WTC11 (cell line): ENCODE measurements at regions of chr1 and their contacts with region 1.

Region 1: DNA sequence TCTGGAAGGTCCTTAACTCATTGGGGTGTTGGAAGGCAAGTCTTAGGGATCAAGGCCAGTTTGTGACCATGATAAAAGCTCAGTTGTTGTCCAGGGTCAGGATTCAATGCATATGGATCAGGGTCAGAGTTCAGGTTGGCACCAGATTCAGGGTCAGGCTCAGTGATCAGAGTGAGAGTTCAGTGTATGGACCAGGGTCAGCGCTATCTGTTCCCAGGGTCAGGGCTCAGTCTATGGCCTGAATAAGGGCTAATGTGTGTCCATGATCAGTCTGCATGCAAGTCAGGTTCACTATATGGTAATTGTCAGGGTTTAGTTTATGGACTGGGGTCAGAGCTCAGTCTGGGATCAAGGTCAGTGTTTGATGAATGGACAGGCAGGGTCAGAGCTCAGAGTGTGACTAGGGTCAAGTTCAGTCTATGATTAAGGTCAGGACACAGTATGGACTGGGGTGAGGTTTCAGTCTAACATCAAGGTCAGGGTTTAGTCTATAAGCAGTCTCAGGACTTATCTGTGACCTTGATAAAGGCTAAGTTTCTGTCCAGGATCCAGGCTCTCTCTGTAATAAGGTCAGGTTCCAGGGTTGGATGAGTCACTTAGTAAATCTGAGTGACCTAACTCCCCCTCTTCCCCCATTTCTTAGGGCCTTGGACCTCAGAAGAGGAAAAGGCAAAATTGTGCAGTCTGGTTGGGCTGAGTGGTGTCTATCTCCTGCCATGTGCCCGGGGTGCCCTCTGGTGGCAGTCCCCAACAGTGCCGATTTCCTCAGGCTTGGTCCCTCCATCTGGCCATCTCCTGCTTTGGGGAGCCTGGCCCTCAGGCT is 23.8 kb downstream of the KNCN start:
- DNase-seq: peak; percentile 91
- ATAC-seq: peak; percentile 60
- H3K4me3 Mint-ChIP-seq: no peak overlapping the region
- H3K27ac Mint-ChIP-seq: no peak overlapping the region
- H3K4me1 Mint-ChIP-seq: peaks cover 56% of the 10 kb centered on the region
- H3K27me3 Mint-ChIP-seq: peaks cover 97% of the 10 kb centered on the region
- CTCF ChIP-seq: peak; percentile 75

Region 2: DNA sequence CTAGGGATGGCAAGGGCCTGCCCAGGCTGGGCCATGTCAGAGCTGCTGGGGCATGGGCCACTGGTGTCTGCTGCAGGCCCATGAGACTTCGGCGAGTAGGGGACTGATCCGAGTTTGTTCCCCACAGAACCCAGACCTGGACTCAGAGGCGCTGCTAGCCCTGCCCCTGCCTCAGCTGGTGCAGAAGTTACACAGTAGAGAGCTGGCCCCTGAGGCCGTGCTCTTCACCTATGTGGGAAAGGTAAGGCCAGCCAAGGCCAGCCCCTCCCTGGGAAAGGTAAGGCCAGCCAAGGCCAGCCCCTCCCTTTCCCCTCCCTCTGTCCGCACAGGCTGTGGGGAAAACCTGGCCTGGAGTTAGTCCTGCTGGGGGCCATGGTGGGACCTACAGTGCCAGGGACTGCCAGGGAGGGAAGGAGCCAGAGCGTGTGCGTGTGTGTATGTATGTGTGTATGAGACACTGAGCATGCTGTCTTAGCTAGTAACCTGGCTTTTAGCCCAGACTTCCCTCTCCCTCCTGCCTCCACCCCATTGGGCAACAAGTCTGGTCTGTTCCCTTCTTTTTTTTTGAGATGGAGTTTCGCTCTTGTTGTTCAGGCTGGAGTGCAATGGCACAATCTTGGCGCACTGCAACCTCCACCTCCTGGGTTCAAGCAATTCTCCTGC is 125.6 kb before region 1 on chr1:
- CTCF ChIA-PET with region 1: interaction called, 13 read pairs
- POLR2A ChIA-PET with region 1: no interaction called
- DNase-seq: peak; percentile 80
- ATAC-seq: peak; percentile 82
- H3K4me3 Mint-ChIP-seq: no peak overlapping the region
- H3K27ac Mint-ChIP-seq: no peak overlapping the region
- H3K4me1 Mint-ChIP-seq: peaks cover 39% of the 10 kb centered on the region
- H3K27me3 Mint-ChIP-seq: no peaks in the 10 kb centered on the region
- CTCF ChIP-seq: no peak

Region 3: DNA sequence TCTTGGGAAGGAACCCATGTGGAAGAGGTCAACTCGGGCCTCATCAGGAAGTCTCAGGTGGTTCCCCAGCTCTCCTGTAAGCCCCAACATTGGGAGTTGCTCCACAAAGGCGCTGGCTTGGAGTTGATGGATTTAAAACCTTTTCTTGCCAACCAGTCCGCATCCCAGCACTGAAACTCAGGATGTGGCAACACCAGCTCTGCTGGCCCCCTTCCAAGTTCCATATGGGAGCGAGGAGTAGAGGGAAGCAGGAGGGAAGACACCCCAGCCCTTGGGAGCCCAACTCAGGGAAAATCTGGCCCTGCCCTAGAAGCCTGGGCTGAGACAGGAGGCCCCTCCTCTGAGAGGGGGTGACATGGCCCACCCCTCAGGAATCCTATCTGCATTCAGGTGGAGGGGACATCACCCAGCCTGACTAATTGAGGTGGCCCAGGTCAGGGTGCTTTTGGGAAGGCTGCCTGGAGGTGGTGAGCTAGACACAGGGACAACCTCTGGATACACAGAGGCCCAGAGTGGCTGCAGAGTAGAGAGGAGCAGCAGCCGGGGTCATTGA is 71.2 kb before region 1 on chr1:
- CTCF ChIA-PET with region 1: interaction called, 55 read pairs
- POLR2A ChIA-PET with region 1: no interaction called
- DNase-seq: no peak
- ATAC-seq: peak; percentile 40
- H3K4me3 Mint-ChIP-seq: no peak overlapping the region
- H3K27ac Mint-ChIP-seq: no peak overlapping the region
- H3K4me1 Mint-ChIP-seq: peaks cover 36% of the 10 kb centered on the region
- H3K27me3 Mint-ChIP-seq: peaks cover 63% of the 10 kb centered on the region
- CTCF ChIP-seq: no peak

Region 4: DNA sequence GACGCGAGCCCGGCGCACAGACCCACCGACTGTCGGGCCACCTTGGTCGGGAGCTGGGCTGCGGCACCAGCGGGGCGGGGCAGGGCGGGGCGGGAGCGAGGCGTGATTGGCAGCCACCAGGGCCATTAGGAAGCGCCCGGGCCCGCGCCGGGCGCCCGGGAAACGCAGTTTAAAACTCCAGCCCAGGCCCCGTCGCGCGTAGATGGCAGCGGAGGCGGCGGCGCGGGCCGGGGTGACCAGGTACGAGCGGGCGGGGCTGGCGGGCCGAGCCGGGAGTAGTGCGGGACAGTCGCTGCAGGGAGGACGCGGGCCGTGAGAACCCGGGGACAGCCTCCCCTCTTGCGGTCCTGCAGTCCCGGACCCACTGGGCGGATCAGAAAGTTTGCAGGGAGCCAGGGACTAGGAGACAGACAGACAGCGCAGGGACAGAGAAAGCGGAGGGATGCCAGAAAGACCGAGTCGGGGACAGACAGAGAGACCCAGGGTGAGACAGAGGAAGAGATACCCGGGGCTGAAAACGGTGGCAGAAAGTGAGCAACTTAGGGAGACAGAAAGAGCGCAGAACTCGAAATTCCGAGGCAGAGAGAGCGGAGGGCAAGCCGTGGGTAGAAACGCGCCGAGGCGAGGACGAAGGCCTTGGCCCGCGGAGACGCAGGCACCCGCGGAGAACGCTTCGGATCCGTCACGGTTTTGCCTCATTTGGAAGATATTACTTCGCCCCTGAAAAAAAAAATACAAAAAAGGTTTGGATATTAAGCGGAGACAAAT is 37.9 kb before region 1 on chr1 and contains the start of gene DMBX1:
- CTCF ChIA-PET with region 1: interaction called, 201 read pairs
- POLR2A ChIA-PET with region 1: interaction called, 10 read pairs
- DNase-seq: peak; percentile 82
- ATAC-seq: peak; percentile 62
- H3K4me3 Mint-ChIP-seq: peak within 1 kb of the TSS; percentile 89
- H3K27ac Mint-ChIP-seq: no peak within 1 kb of the TSS
- H3K4me1 Mint-ChIP-seq: peaks cover 60% of the 10 kb centered on the region
- H3K27me3 Mint-ChIP-seq: peaks cover 99% of the 10 kb centered on the region
- CTCF ChIP-seq: no peak
- total RNA-seq, gene DMBX1: 1.7 to 3.7 TPM (median 1.8 TPM) in 3 replicates

Region 5: GRCh38 chr1:46517010-46517600 is 10.6 kb before region 1 on chr1:
- CTCF ChIA-PET with region 1: interaction called, 34 read pairs
- POLR2A ChIA-PET with region 1: no interaction called
- DNase-seq: peak; percentile 76
- ATAC-seq: peak; percentile 83
- H3K4me3 Mint-ChIP-seq: peak overlapping the region; percentile 49
- H3K27ac Mint-ChIP-seq: peak overlapping the region; percentile 79; the same call in 1 of the 2 replicates
- H3K4me1 Mint-ChIP-seq: peaks cover 69% of the 10 kb centered on the region
- H3K27me3 Mint-ChIP-seq: peaks cover 52% of the 10 kb centered on the region
- CTCF ChIP-seq: no peak

Region 6: GRCh38 chr1:46603858-46604549 is 76.3 kb after region 1 on chr1 and contains the start of gene MKNK1:
- CTCF ChIA-PET with region 1: interaction called, 42 read pairs
- POLR2A ChIA-PET with region 1: no interaction called
- DNase-seq: peak; percentile 100
- ATAC-seq: peak; percentile 93
- H3K4me3 Mint-ChIP-seq: peak within 1 kb of the TSS; percentile 89
- H3K27ac Mint-ChIP-seq: peak within 1 kb of the TSS; percentile 79
- H3K4me1 Mint-ChIP-seq: peaks cover 21% of the 10 kb centered on the region
- H3K27me3 Mint-ChIP-seq: no peaks in the 10 kb centered on the region
- CTCF ChIP-seq: no peak
- total RNA-seq, gene MKNK1: 17.5 to 18.6 TPM (median 18.0 TPM) in 3 replicates

Region 7: GRCh38 chr1:46724991-46725735 is 197.5 kb after region 1 on chr1:
- CTCF ChIA-PET with region 1: interaction called, 11 read pairs
- POLR2A ChIA-PET with region 1: no interaction called
- DNase-seq: peak; percentile 69
- ATAC-seq: peak; percentile 97
- H3K4me3 Mint-ChIP-seq: no peak overlapping the region
- H3K27ac Mint-ChIP-seq: no peak overlapping the region
- H3K4me1 Mint-ChIP-seq: peaks cover 16% of the 10 kb centered on the region
- H3K27me3 Mint-ChIP-seq: peaks cover 14% of the 10 kb centered on the region
- CTCF ChIP-seq: peak; percentile 53